ENCODE measurements at regions of chr14 and their contacts with region 1.

Region 1: GRCh38 chr14:97697772-97698171 is 900.6 kb downstream of the VRK1 start:
- DNase-seq: peak; percentile 55
- H3K4me3 Mint-ChIP-seq: peak overlapping the region; percentile 66
- H3K27ac Mint-ChIP-seq: peak overlapping the region; percentile 85
- H3K4me1 Mint-ChIP-seq: peaks cover 55% of the 10 kb centered on the region
- H3K27me3 Mint-ChIP-seq: peaks cover 2% of the 10 kb centered on the region

Region 2: GRCh38 chr14:97620066-97620465 is 77.7 kb before region 1 on chr14:
- intact Hi-C with region 1: loop called (anchors 5 kb)
- DNase-seq: no peak
- H3K4me3 Mint-ChIP-seq: peak overlapping the region; percentile 79
- H3K27ac Mint-ChIP-seq: peak overlapping the region; percentile 56
- H3K4me1 Mint-ChIP-seq: peaks cover 47% of the 10 kb centered on the region
- H3K27me3 Mint-ChIP-seq: peaks cover 4% of the 10 kb centered on the region